A549 (cell line): ENCODE measurements at regions of chr18 and their contacts with region 1.

Region 1: DNA sequence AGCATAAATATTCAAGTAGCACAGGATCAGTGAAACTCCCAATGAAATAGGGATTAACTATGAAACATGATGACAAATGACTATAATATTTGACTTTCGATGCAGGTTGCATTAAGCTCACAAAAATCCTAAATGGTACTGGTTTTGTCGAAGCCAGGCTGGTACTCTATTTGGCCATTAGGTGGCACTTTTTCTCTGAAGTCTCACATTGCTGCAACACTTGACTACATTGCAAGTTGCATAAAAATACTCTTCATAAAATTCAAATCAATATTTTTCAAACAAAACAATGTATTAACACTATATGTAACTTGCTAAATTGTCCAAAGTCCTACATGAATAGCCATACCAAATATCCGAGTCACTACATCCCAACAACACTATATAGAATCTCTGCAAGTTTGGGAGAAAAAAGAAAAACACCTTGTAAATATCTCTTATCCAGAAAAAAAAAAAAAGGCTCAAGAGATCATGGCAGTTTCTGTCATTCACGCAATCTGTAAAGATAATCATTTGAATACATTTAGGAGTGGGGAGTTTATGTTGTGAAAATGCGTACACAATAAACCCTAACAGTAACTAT is 9.5 kb downstream of the RTTN start:
- DNase-seq: peak; percentile 10 to 62
- ATAC-seq: peak; percentile 59 to 79; a peak in 3 of 6 replicates
- H3K4me3 ChIP-seq: no peak overlapping the region
- H3K27ac ChIP-seq: peak overlapping the region; percentile 73 to 81
- H3K4me1 ChIP-seq: peaks cover 37% of the 10 kb centered on the region
- CTCF ChIP-seq: peak; percentile 77
- EP300 ChIP-seq: no peak
- POLR2A ChIP-seq: no peak
- RAD21 ChIP-seq: peak; percentile 80 to 82

Region 2: DNA sequence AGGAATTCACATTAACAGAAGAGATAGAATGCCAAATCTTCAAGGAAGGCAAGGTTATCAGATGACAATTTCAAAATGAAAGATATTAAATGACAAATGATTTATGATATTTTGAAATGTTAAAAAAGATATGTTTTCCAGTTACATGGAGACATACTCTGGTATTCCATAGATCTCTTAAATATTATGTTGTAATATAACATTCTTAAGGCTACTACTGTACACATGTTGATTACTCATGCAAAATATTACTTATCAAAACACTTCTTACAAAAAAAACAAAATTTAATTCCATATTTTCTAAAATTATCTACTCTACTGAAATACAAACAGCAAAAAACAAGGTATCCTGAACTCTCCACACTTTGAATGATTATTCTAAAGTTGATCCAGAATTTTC is 13.4 kb before region 1 on chr18:
- CTCF ChIA-PET with region 1: interaction called, 19 read pairs
- POLR2A ChIA-PET with region 1: no interaction called
- DNase-seq: no peak
- ATAC-seq: no peak
- H3K4me3 ChIP-seq: no peak overlapping the region
- H3K27ac ChIP-seq: peak overlapping the region; percentile 81 to 88
- H3K4me1 ChIP-seq: peaks cover 61% of the 10 kb centered on the region
- CTCF ChIP-seq: no peak
- EP300 ChIP-seq: no peak
- POLR2A ChIP-seq: no peak
- RAD21 ChIP-seq: no peak

Region 3: GRCh38 chr18:70390371-70391090 is 194.6 kb after region 1 on chr18:
- CTCF ChIA-PET with region 1: no interaction called
- POLR2A ChIA-PET with region 1: no interaction called
- DNase-seq: no peak
- ATAC-seq: no peak
- H3K4me3 ChIP-seq: no peak overlapping the region
- H3K27ac ChIP-seq: peak overlapping the region; percentile 44 to 81; a peak in 4 of 6 replicates
- H3K4me1 ChIP-seq: peaks cover 22% of the 10 kb centered on the region
- CTCF ChIP-seq: no peak
- EP300 ChIP-seq: no peak
- POLR2A ChIP-seq: no peak
- RAD21 ChIP-seq: no peak

Region 4: GRCh38 chr18:70431203-70431624 is 235.3 kb after region 1 on chr18:
- CTCF ChIA-PET with region 1: interaction called, 26 read pairs
- POLR2A ChIA-PET with region 1: no interaction called
- DNase-seq: peak; percentile 78 to 98
- ATAC-seq: peak; percentile 86 to 97
- H3K4me3 ChIP-seq: no peak overlapping the region
- H3K27ac ChIP-seq: peak overlapping the region; percentile 93 to 100
- H3K4me1 ChIP-seq: peaks cover 41% of the 10 kb centered on the region
- CTCF ChIP-seq: no peak
- EP300 ChIP-seq: peak; percentile 100
- POLR2A ChIP-seq: no peak
- RAD21 ChIP-seq: peak; percentile 34 to 77

Region 5: GRCh38 chr18:70454704-70455322 is 258.9 kb after region 1 on chr18:
- CTCF ChIA-PET with region 1: interaction called, 55 read pairs
- POLR2A ChIA-PET with region 1: interaction called, 5 read pairs
- DNase-seq: peak; percentile 38 to 76
- ATAC-seq: peak; percentile 71 to 85
- H3K4me3 ChIP-seq: no peak overlapping the region
- H3K27ac ChIP-seq: peak overlapping the region; percentile 50 to 74
- H3K4me1 ChIP-seq: peaks cover 19% of the 10 kb centered on the region
- CTCF ChIP-seq: peak; percentile 85
- EP300 ChIP-seq: no peak
- POLR2A ChIP-seq: no peak
- RAD21 ChIP-seq: peak; percentile 83 to 87

Region 6: GRCh38 chr18:70491734-70492348 is 295.9 kb after region 1 on chr18:
- CTCF ChIA-PET with region 1: no interaction called
- POLR2A ChIA-PET with region 1: no interaction called
- DNase-seq: peak; percentile 28 to 61
- ATAC-seq: peak; percentile 86 to 94
- H3K4me3 ChIP-seq: no peak overlapping the region
- H3K27ac ChIP-seq: no peak overlapping the region
- H3K4me1 ChIP-seq: no peaks in the 10 kb centered on the region
- CTCF ChIP-seq: peak; percentile 83
- EP300 ChIP-seq: no peak
- POLR2A ChIP-seq: no peak
- RAD21 ChIP-seq: peak; percentile 64 to 70